ENCODE measurements at regions of chr1 and their contacts with region 1.

Region 1: GRCh38 chr1:9701661-9702060 is 50.1 kb downstream of the PIK3CD start:
- DNase-seq: no peak
- ATAC-seq: no peak
- H3K4me3 ChIP-seq: no peak overlapping the region
- H3K27ac ChIP-seq: no peak overlapping the region
- H3K4me1 ChIP-seq: peaks cover 7% of the 10 kb centered on the region; the same call in 1 of the 2 replicates
- H3K27me3 ChIP-seq: no peaks in the 10 kb centered on the region
- CTCF ChIP-seq: no peak
- EP300 ChIP-seq: no peak
- POLR2A ChIP-seq: no peak
- RAD21 ChIP-seq: no peak

Region 2: GRCh38 chr1:9724706-9725476 is 23.2 kb after region 1 on chr1:
- CTCF ChIA-PET with region 1: interaction called, 11 read pairs
- POLR2A ChIA-PET with region 1: no interaction called
- in situ Hi-C with region 1: no loop called
- intact Hi-C with region 1: no loop called
- DNase-seq: peak; percentile 58
- ATAC-seq: peak; percentile 89
- H3K4me3 ChIP-seq: no peak overlapping the region
- H3K27ac ChIP-seq: no peak overlapping the region
- H3K4me1 ChIP-seq: no peaks in the 10 kb centered on the region
- H3K27me3 ChIP-seq: no peaks in the 10 kb centered on the region
- CTCF ChIP-seq: peak; percentile 93
- EP300 ChIP-seq: no peak
- POLR2A ChIP-seq: no peak
- RAD21 ChIP-seq: peak; percentile 79

Region 3: GRCh38 chr1:11550664-11551283 is 1849.1 kb after region 1 on chr1:
- CTCF ChIA-PET with region 1: no interaction called
- POLR2A ChIA-PET with region 1: no interaction called
- in situ Hi-C with region 1: no loop called
- intact Hi-C with region 1: no loop called
- DNase-seq: peak; percentile 68
- ATAC-seq: peak; percentile 59; the same call in 2 of the 3 replicates
- H3K4me3 ChIP-seq: no peak overlapping the region
- H3K27ac ChIP-seq: no peak overlapping the region
- H3K4me1 ChIP-seq: no peaks in the 10 kb centered on the region
- H3K27me3 ChIP-seq: peaks cover 0 to 10% of the 10 kb centered on the region in 2 experiments; a peak in 2 of 5 replicates
- CTCF ChIP-seq: no peak
- EP300 ChIP-seq: no peak
- POLR2A ChIP-seq: no peak
- RAD21 ChIP-seq: no peak; the same call in 1 of the 2 replicates

Measured in HepG2 (cell line).